Activated naive CD4-positive, alpha-beta T cell treated with anti-CD3 and anti-CD28 coated beads for 36 hours (primary cell): ENCODE measurements at regions of chr9 and their contacts with region 1.

Region 1: DNA sequence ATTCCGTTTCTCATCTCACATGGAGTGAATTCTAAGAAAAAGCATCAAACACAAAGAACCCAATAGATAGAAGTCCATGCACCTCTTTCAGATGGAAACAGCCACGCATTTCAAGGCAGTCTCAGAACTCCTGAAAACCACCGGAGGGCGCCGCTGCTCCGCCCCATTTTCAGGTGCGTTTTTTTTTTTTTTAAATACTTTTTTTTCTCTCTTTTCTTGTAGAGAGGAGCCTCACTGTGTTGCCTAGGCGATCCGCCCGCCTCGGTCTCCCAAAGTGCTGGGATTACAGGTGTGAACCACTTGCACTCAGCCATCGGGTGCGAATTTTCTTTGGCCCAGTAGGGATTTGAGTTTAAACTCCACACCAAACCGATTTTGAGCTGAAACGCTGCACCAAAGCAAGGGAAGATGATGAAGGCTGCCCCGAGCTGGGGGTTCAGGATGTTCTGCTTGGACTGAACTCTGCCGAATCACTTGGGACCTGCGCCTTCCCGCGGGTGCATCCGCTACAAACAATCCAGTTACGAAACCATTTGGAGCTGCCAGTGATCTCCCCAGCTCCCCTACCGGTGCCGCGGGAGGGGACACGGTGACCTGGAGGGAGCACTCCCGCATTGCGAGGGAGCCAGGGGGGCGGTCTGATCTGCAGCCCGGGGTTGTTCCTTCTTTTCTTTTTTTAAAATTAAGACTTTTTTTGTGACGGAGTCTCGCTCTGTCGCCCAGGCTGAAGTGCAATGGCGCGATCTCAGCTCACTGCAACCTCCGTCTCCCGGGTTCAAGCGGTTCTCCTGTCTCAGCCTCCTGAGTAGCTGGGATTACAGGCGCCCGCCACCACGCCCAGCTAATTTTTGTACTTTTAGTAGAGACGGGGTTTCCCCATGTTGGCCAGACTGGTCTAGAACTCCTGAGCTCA is 1.4 kb downstream of the PTGR1 start:
- DNase-seq: peak; percentile 81
- H3K4me3 Mint-ChIP-seq: peak overlapping the region; percentile 80
- H3K27ac Mint-ChIP-seq: no peak overlapping the region
- H3K4me1 Mint-ChIP-seq: peaks cover 12% of the 10 kb centered on the region
- H3K27me3 Mint-ChIP-seq: peaks cover 27% of the 10 kb centered on the region

Region 2: GRCh38 chr9:111348821-111349271 is 249.2 kb before region 1 on chr9:
- CTCF ChIA-PET with region 1: no interaction called
- intact Hi-C with region 1: no loop called
- DNase-seq: no peak
- H3K4me3 Mint-ChIP-seq: no peak overlapping the region
- H3K27ac Mint-ChIP-seq: no peak overlapping the region
- H3K4me1 Mint-ChIP-seq: no peaks in the 10 kb centered on the region
- H3K27me3 Mint-ChIP-seq: peaks cover 11% of the 10 kb centered on the region

Region 3: DNA sequence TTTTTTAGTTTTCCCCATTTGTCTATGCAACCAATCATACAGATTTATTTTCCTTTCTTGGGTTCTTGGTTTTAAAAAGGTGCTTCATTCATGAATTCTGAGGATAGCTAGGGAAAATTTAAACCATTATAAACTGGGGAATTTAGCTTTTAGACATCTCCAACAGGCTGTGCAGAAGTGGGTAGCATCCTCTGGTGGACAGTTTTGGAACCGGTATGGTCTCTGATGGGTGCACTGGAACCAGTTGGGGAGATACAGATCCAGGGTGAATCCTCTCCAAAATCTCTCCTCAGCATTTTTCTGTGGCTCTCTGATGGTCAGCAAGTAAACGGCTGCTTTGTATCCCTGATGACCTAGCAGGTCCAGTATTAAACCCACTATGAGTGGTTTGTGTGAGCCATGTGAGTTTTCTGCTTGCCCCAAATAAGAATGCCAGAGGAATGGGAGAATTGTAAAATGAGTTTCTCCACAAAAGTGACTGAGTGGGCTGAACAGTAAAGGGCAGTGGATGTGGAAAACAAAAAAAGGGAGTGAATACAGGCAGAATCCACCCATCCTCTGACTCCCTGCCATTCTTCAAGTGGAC is 23.9 kb after region 1 on chr9:
- CTCF ChIA-PET with region 1: interaction called, 20 read pairs
- intact Hi-C with region 1: loop called (anchors 2 kb)
- DNase-seq: peak; percentile 46
- H3K4me3 Mint-ChIP-seq: no peak overlapping the region
- H3K27ac Mint-ChIP-seq: no peak overlapping the region
- H3K4me1 Mint-ChIP-seq: no peaks in the 10 kb centered on the region
- H3K27me3 Mint-ChIP-seq: peaks cover 9% of the 10 kb centered on the region

Region 4: DNA sequence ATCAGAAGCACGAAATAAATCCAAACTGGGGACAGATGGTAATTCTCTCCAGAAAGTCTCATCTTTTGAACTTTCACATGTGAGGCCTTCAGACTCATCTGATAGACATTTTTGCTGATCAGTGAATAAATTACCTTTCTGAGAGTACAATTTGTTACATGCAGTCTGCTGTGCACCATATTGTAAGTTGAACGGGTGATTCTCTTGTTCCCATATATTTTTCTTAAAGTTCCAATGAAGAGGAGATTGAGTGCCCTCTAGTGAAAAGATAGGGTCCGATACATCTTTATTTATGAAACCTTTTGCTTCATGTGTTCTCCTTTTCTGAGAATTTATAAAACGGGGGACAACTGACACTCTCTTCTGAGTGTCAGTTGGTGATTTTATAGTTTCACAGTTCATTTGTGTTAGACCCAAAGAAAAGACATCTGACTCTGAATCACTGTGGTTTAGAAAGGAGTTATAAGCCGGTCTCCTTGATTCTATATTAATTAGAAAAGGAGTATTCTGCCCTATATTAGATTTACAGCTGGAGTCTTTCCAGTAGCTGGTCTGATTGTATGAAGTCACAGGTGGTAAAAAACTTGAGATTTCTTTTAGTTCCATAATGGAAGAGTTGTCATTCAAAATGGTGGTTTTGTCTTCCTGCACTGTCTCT is 93.7 kb after region 1 on chr9:
- CTCF ChIA-PET with region 1: interaction called, 10 read pairs
- intact Hi-C with region 1: loop called (anchors 1 kb)
- DNase-seq: no peak
- H3K4me3 Mint-ChIP-seq: no peak overlapping the region
- H3K27ac Mint-ChIP-seq: no peak overlapping the region
- H3K4me1 Mint-ChIP-seq: peaks cover 3% of the 10 kb centered on the region
- H3K27me3 Mint-ChIP-seq: no peaks in the 10 kb centered on the region

Region 5: DNA sequence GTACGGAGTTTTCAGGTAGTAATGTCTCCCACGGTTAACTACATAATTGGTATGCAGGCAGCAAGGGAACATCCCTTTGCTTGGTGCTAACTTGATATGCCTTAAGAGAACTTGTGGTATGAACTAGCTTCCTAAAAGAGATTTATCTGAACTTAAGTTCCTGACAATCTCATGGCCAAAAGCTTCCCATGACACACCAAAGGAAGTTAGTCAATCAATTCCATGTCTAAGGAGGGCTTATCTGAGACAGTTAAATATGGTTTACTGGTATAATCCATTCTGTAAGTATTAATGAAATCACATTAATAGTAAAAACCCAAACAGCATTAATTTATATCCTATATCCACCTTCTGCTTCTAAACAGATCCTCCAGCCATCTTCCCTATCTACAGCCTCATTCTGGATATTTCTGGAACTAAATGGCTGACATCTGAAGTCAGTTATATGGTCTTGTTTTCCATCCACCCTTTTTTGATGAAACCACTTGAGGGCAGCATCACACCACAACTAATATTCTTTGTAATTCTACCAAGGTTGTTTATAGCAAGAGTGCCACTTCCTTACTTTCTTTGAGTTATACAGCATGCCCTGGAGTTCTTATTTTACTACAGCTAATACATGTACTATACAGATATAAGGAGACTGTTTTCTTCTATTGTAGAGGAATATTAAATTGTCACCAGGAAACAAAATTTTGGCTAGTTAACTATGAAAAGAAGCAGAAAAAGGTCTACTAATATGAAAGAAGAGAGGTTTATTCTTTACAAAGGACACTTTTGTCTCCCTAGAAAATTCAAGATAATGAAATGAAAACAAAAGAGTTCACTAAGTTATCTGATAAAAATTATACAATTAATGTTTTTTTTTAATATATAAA is 161.9 kb after region 1 on chr9:
- CTCF ChIA-PET with region 1: interaction called, 7 read pairs
- intact Hi-C with region 1: loop called (anchors 1 kb)
- DNase-seq: peak; percentile 71
- H3K4me3 Mint-ChIP-seq: no peak overlapping the region
- H3K27ac Mint-ChIP-seq: no peak overlapping the region
- H3K4me1 Mint-ChIP-seq: peaks cover 4% of the 10 kb centered on the region
- H3K27me3 Mint-ChIP-seq: no peaks in the 10 kb centered on the region

Region 6: DNA sequence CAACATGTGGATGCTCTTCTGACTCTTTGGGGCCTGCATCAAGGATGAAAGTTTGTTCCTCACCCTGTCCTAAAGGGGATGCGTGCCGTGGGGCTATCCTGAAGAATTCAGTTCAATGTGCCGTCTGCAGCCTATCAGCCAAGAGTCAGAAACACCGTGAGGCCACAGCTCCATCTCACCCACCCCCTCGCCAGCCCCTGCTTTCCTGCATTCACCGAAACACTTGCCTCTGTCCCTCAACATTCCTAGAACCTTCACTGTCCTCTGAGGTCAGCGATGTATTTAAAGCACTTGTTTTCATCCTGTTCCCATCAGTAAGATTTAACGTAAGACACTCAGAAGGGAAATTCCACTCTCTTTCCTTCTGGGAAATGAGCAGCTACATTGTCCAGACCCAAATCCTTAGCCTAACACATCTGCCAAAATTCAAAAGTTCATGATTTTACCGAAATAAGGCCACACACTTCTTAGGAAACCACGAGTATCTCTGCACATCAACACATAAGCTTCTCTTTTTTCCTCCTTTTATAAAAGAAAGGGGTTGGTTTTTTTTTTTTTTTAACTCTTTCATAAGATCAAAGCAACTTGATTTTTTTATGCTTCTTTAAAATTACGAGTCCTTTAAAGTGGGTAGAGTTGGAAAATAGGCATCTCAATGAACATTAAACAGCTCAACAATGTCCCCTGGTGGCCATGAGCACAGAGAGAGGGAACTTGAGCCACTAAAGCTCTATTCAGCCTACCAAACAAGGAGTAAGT is 476.4 kb after region 1 on chr9:
- CTCF ChIA-PET with region 1: interaction called, 24 read pairs
- intact Hi-C with region 1: loop called (anchors 1 kb)
- DNase-seq: peak; percentile 85
- H3K4me3 Mint-ChIP-seq: no peak overlapping the region
- H3K27ac Mint-ChIP-seq: no peak overlapping the region
- H3K4me1 Mint-ChIP-seq: peaks cover 28% of the 10 kb centered on the region
- H3K27me3 Mint-ChIP-seq: no peaks in the 10 kb centered on the region